PC-9 (cell line): ENCODE measurements at regions of chr11 and their contacts with region 1.

Region 1: DNA sequence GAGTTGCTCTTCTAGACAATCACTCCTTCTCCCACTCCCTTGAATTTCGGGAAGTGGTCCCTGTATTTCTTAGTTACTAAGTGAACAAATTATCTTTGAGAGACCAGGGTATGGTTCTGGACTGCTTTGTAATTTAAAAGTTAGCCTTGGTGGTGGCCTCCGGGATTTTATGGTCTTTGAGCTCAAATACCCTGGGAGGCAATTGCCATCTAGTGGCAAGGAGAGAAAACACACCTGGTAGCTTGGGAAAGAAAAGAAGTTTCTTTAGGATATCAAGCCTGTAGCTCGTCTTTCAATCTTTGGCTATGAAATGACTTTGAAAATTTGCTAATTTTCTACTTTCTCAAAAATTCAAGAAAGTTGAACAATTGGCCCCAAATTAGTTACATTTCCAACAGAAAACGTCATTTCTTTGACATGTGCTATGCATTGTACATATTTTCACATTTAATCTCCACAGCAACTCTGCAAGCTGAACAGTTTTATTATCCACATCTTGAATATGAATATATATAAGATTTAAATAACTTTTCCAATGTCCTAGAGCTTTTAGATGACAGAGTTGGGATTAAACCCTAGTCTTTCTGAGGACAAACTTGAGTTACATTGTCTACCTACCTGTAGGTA is 39.1 kb downstream of the MMP27 start:
- DNase-seq: peak; percentile 22 to 46
- H3K4me3 ChIP-seq: no peak overlapping the region
- H3K27ac ChIP-seq: no peak overlapping the region
- H3K4me1 ChIP-seq: no peaks in the 10 kb centered on the region
- H3K27me3 ChIP-seq: no peaks in the 10 kb centered on the region
- CTCF ChIP-seq: peak; percentile 96

Region 2: GRCh38 chr11:101456812-101457211 is 1209.6 kb before region 1 on chr11:
- CTCF ChIA-PET with region 1: no interaction called
- POLR2A ChIA-PET with region 1: no interaction called
- intact Hi-C with region 1: loop called (anchors 10 kb)
- DNase-seq: no peak
- H3K4me3 ChIP-seq: no peak overlapping the region
- H3K27ac ChIP-seq: no peak overlapping the region
- H3K4me1 ChIP-seq: no peaks in the 10 kb centered on the region
- H3K27me3 ChIP-seq: no peaks in the 10 kb centered on the region
- CTCF ChIP-seq: peak; percentile 77

Region 3: DNA sequence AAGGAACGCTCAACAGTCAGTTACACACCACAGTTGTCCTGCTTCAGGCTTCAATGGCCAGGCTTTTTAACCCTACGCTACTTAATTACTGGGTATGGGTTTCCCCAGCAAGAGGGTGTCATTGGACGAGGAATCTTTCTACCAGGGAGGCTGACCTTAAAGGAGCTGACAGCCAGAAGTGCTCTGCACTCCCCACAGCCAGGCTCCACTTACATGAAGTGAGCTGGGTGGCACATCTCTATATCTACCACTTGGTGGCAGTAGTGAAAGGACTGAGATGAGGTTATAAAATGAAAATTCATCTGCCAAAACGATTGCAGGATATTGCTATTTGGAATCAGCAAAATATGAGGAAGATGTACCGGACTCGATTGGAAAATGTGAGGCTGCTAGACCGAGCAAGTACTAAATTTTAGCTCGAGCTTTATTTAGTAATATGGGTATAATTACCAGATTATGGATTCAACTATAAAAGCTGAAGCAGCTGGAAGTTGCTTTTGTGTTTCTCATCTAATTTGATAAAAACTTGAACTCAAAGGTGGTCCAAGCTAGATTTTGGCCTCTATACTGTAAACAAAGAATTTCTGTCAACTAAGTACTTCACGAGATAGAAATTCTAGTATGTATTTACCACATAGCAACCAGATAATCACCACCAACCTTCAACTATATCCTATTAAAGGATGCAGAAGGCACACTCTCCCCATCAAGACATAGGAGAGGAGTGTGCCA is 805.6 kb before region 1 on chr11:
- CTCF ChIA-PET with region 1: no interaction called
- POLR2A ChIA-PET with region 1: no interaction called
- intact Hi-C with region 1: loop called (anchors 1 kb)
- DNase-seq: peak; percentile 30 to 68
- H3K4me3 ChIP-seq: no peak overlapping the region
- H3K27ac ChIP-seq: no peak overlapping the region
- H3K4me1 ChIP-seq: peaks cover 20% of the 10 kb centered on the region
- H3K27me3 ChIP-seq: no peaks in the 10 kb centered on the region
- CTCF ChIP-seq: peak; percentile 89

Region 4: DNA sequence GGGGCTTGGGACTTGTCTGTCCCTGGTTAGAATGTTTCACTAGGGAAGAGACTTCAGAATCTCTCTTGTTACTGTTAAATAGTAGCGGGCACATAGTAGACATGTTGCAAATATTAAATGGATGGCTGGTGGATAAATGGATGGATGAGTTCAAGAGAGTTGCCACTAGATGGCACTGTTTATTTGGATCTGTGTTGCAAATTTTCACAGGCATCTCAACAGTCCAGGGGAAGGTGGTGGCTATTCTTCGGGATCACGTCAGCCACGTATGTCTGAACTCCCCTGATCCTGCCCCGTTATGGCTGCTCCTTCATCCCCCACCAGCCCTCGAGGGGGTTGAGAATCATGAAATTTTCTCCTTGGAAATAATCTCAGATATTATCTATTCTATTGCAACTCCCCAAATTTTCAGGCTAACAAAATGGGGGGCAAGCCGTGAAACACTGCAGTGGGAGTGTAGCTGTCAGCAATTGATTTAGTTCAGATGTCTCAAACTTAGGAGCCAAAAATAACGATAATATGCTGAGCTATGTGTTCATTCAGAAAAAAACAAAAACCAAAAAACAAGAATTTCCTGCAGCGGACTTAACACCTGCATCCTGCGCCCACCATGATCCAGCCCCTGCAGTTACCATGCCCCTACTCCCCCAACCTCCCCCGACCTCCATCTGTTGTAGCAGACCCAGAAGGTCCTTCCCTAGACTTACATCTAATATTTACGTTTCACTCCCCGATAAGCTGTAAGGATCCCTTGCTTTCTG is 378.3 kb before region 1 on chr11:
- CTCF ChIA-PET with region 1: interaction called, 5 read pairs
- POLR2A ChIA-PET with region 1: no interaction called
- intact Hi-C with region 1: loop called (anchors 1 kb)
- DNase-seq: peak; percentile 38 to 67
- H3K4me3 ChIP-seq: no peak overlapping the region
- H3K27ac ChIP-seq: no peak overlapping the region
- H3K4me1 ChIP-seq: peaks cover 24% of the 10 kb centered on the region
- H3K27me3 ChIP-seq: no peaks in the 10 kb centered on the region
- CTCF ChIP-seq: peak; percentile 92

Region 5: DNA sequence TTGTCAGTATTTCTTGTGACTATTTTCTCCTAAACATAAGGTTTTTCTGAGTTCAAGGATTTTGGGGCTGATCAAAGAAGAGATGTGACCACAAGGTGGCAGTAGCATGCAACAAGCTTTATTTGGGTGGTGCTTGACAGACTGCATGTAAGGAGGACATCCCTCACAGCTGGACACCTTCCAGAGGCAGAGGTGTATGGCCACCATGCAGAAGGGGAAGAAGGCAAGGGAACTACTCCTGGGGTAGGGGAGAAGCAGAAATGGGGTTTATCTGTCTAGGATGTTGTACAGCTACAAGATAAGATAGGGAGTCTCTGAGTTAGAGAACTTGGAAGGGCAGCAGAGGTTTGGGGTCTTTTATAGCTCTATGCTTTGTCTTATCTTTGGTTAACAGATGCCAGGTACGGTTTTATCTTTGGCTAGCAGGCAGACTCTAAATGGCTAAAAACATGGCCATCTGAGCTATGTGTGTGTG is 324.6 kb before region 1 on chr11:
- CTCF ChIA-PET with region 1: interaction called, 8 read pairs
- POLR2A ChIA-PET with region 1: no interaction called
- intact Hi-C with region 1: loop called (anchors 1 kb)
- DNase-seq: peak; percentile 58 to 68
- H3K4me3 ChIP-seq: no peak overlapping the region
- H3K27ac ChIP-seq: no peak overlapping the region
- H3K4me1 ChIP-seq: peaks cover 17% of the 10 kb centered on the region
- H3K27me3 ChIP-seq: no peaks in the 10 kb centered on the region
- CTCF ChIP-seq: peak; percentile 92

Region 6: DNA sequence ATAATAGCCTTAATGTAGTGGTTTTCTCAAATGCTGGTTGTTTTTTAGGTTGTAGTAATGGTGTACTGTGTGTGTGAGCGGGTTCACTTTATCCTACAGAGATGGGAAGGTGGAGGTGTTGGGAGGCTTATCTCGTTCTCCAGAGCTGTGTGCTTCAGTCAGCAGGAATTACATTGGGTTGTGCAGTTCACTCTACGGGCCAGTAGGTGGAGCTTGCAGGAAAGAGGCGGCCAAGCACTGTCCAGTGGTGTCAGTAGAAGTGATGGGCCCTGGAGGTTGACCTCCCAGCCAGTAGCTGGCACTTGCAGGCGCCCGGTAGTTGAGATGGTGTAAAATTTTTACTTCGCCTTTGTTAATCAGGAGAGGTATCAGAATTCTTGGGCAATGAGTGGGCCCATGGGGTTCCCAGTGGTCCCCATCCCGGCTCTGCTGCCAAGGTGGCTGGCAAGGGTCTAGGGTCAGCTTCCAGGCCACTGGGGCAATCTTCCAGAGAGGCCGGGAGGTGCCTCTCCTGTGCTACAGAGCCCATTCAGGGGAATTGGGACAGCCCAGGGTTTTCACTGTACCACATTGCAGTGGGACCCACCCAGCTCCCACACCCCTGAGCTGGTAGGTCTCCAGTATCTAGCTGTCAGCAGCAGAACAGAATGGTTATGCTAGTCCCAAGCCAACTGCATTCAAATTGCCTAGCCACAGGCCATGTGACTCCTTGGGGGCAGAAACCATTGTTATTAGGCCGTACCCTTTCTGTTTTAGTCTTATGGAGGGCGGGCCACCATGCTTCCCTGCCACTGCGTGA is 275.6 kb before region 1 on chr11:
- CTCF ChIA-PET with region 1: interaction called, 6 read pairs
- POLR2A ChIA-PET with region 1: no interaction called
- intact Hi-C with region 1: loop called (anchors 1 kb)
- DNase-seq: peak; percentile 45 to 55
- H3K4me3 ChIP-seq: no peak overlapping the region
- H3K27ac ChIP-seq: no peak overlapping the region
- H3K4me1 ChIP-seq: no peaks in the 10 kb centered on the region
- H3K27me3 ChIP-seq: no peaks in the 10 kb centered on the region
- CTCF ChIP-seq: peak; percentile 96

Region 7: GRCh38 chr11:102727890-102728289 is 61.4 kb after region 1 on chr11:
- CTCF ChIA-PET with region 1: no interaction called
- POLR2A ChIA-PET with region 1: no interaction called
- intact Hi-C with region 1: no loop called
- DNase-seq: no peak
- H3K4me3 ChIP-seq: no peak overlapping the region
- H3K27ac ChIP-seq: no peak overlapping the region
- H3K4me1 ChIP-seq: no peaks in the 10 kb centered on the region
- H3K27me3 ChIP-seq: no peaks in the 10 kb centered on the region; the same call in 1 of the 2 replicates
- CTCF ChIP-seq: no peak